Naive thymus-derived CD4-positive, alpha-beta T cell (primary cell): ENCODE measurements at regions of chr4 and their contacts with region 1.

Region 1: DNA sequence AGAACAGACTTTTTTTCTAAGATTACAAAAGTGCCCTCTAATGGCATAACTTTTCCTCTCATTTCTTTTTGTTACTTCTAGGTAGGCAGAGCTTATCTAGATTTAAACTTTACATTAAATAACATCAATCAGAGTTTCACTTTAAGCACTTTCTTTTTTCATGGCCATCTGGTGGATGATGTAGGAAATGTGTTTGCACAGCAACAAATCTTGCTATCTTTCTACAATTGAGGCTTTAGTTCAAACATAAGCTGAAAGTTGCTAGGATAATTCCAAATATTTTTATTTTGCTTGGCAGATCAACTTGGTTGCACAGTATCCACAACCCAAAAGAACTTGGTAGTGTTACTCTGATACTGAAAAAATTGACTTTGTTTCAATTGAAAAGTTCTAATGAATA is 22.0 kb downstream of the NDNF start:
- DNase-seq: peak in 6 of 9 donors; percentile 11 to 39 (median 26)
- ATAC-seq: peak; percentile 38
- H3K4me3 ChIP-seq: no peak overlapping the region
- H3K4me3 Mint-ChIP-seq: no peak overlapping the region
- H3K27ac ChIP-seq: no peak overlapping the region
- H3K27ac Mint-ChIP-seq: peak overlapping the region in 1 of 9 donors; percentile 51
- H3K4me1 ChIP-seq: no peaks in the 10 kb centered on the region
- H3K4me1 Mint-ChIP-seq: peaks cover 3 to 12% (median 5%) of the 10 kb centered on the region in 7 donors
- H3K27me3 ChIP-seq: no peaks in the 10 kb centered on the region
- H3K27me3 Mint-ChIP-seq: peaks cover 0 to 68% (median 0%) of the 10 kb centered on the region in 5 donors

Region 2: GRCh38 chr4:120718979-120719566 is 331.2 kb before region 1 on chr4:
- CTCF ChIA-PET with region 1: interaction called, 4 read pairs
- POLR2A ChIA-PET with region 1: no interaction called
- intact Hi-C with region 1: loop called in 1 of 2 experiments (anchors 1 kb)
- DNase-seq: peak in 6 of 9 donors; percentile 6 to 40 (median 36)
- ATAC-seq: peak; percentile 82
- H3K4me3 ChIP-seq: no peak overlapping the region
- H3K4me3 Mint-ChIP-seq: no peak overlapping the region
- H3K27ac ChIP-seq: no peak overlapping the region
- H3K27ac Mint-ChIP-seq: no peak overlapping the region
- H3K4me1 ChIP-seq: no peaks in the 10 kb centered on the region
- H3K4me1 Mint-ChIP-seq: peaks cover 0 to 2% (median 0%) of the 10 kb centered on the region in 7 donors
- H3K27me3 ChIP-seq: no peaks in the 10 kb centered on the region
- H3K27me3 Mint-ChIP-seq: peaks cover 0 to 16% (median 0%) of the 10 kb centered on the region in 5 donors

Region 3: GRCh38 chr4:120873554-120873953 is 176.7 kb before region 1 on chr4:
- CTCF ChIA-PET with region 1: interaction called, 3 read pairs
- POLR2A ChIA-PET with region 1: interaction called, 4 read pairs
- intact Hi-C with region 1: loop called in 1 of 2 experiments (anchors 1 kb)
- DNase-seq: no peak
- ATAC-seq: no peak
- H3K4me3 ChIP-seq: no peak overlapping the region
- H3K4me3 Mint-ChIP-seq: no peak overlapping the region
- H3K27ac ChIP-seq: no peak overlapping the region
- H3K27ac Mint-ChIP-seq: no peak overlapping the region
- H3K4me1 ChIP-seq: no peaks in the 10 kb centered on the region
- H3K4me1 Mint-ChIP-seq: peaks cover 0 to 3% (median 0%) of the 10 kb centered on the region in 7 donors
- H3K27me3 ChIP-seq: no peaks in the 10 kb centered on the region
- H3K27me3 Mint-ChIP-seq: peaks cover 0 to 8% (median 3%) of the 10 kb centered on the region in 5 donors

Region 4: DNA sequence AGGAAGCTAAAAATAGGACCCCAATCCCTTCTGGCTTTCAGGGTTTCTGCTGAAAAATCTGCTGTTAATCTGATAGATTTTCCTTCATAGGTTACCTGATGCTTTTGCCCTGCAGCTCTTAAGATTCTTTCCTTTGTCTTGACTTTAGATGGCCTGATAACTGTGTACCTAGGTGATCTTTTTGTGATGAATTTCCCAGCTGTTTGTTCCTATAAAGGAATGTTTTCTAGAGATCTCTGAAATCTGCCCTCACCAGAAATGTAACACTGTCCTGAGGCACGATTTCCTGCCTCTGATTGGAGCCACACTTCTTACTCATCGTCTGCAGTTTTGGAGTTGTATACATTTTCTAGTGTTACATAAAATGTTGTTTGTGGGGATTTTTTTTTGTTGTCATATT is 58.4 kb before region 1 on chr4:
- CTCF ChIA-PET with region 1: no interaction called
- POLR2A ChIA-PET with region 1: no interaction called
- intact Hi-C with region 1: no loop called
- DNase-seq: no peak
- ATAC-seq: no peak
- H3K4me3 ChIP-seq: no peak overlapping the region
- H3K4me3 Mint-ChIP-seq: no peak overlapping the region
- H3K27ac ChIP-seq: no peak overlapping the region
- H3K27ac Mint-ChIP-seq: no peak overlapping the region
- H3K4me1 ChIP-seq: peaks cover 0 to 10% of the 10 kb centered on the region in 2 donors
- H3K4me1 Mint-ChIP-seq: peaks cover 0 to 29% (median 19%) of the 10 kb centered on the region in 7 donors
- H3K27me3 ChIP-seq: no peaks in the 10 kb centered on the region
- H3K27me3 Mint-ChIP-seq: peaks cover 0 to 2% (median 0%) of the 10 kb centered on the region in 5 donors

Region 5: DNA sequence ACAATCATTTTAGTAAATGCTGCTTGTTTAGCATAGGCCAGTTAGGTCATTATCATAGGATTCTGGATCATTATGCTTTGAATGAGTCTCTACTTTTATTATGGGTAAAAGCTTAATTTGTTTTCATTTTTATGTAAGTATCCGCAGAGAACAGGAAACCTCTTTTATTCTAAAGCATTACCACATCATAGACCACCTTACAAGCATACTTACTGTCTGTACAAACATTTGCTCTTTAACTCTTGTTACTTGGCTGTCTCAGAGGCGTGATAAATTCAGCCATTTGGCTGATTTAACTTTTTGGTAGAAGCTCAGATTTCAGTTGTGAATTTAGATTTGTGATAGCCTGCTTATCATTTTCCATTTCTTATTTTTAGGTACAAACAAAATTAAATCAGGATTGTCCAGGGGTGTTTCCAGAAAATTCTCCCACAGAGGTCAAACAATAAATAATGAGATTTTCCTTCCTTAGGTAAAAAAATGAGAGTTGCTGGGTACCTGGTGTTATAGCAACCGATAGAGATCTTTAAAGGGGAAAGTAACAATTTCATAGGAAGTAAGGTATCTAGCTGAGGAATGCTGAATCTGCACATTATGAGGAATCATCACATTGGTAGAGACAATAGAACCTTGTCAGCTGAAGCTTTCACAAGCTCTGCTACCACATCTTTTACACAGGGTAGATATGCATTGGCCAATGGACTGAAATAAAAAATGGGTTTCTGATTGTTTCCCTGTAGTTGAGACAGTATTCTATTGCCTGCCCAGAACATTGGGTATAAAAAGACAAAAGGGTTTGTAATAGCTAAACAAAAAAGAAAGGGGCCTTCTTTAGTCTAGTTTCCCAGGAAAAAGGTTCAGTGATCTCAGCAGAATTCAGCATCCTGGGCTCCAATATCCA is 40.5 kb before region 1 on chr4:
- CTCF ChIA-PET with region 1: no interaction called
- POLR2A ChIA-PET with region 1: no interaction called
- intact Hi-C with region 1: loop called in 1 of 2 experiments (anchors 2 kb)
- DNase-seq: peak in 7 of 9 donors; percentile 18 to 70 (median 64)
- ATAC-seq: peak; percentile 93
- H3K4me3 ChIP-seq: no peak overlapping the region
- H3K4me3 Mint-ChIP-seq: peak overlapping the region in 9 of 10 donors; percentile 42 to 89 (median 74)
- H3K27ac ChIP-seq: peak overlapping the region; percentile 26
- H3K27ac Mint-ChIP-seq: peak overlapping the region in 8 of 9 donors; percentile 81 to 97 (median 92)
- H3K4me1 ChIP-seq: peaks cover 0 to 39% of the 10 kb centered on the region in 2 donors
- H3K4me1 Mint-ChIP-seq: peaks cover 3 to 96% (median 82%) of the 10 kb centered on the region in 7 donors
- H3K27me3 ChIP-seq: no peaks in the 10 kb centered on the region
- H3K27me3 Mint-ChIP-seq: no peaks in the 10 kb centered on the region

Region 6: DNA sequence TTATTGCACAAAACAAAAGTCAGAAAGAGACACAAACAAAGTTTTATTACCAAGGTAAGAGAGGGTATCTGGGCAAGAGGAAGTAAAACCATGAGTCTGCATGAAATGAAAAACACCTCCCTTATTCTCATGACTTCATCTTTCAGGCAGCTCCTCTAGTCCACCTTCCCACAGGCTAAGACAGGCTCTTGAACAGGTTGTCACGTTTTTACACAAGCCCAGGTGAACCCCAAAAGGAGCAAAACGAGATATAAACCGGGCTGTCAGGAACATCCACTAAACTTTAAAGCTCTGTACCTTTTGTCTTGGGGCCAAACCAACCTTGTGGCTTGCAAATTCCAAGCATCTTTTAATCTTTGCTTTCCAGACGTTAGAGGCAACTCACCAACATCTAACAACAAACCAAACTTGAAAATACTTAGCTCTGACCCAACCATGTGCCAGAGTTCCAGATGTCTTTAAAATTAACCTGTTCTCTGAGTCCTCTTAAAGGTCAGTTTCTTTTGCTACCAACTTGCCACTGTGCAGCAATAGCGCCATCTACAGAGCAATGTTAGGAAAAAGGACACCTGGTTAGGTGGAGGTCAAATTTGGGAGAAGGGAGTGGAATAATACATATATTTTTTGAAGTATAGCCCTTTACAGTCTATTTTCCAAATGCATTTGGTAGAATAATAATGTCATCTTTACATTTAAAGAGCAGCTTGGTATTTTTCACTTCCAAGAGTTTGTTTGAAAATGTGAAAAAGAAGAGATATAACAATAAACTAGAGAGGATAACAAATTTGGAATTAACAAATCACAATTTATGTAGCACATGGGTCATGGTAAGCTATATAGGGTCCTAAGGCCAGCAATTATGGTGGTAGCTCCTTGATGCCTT is 257.4 kb after region 1 on chr4:
- CTCF ChIA-PET with region 1: no interaction called
- POLR2A ChIA-PET with region 1: no interaction called
- intact Hi-C with region 1: loop called in 1 of 2 experiments (anchors 5 kb)
- DNase-seq: peak in 7 of 9 donors; percentile 10 to 52 (median 33)
- ATAC-seq: peak; percentile 70
- H3K4me3 ChIP-seq: no peak overlapping the region
- H3K4me3 Mint-ChIP-seq: no peak overlapping the region
- H3K27ac ChIP-seq: no peak overlapping the region
- H3K27ac Mint-ChIP-seq: peak overlapping the region in 1 of 9 donors; percentile 39
- H3K4me1 ChIP-seq: peaks cover 0 to 9% of the 10 kb centered on the region in 2 donors
- H3K4me1 Mint-ChIP-seq: peaks cover 3 to 19% (median 15%) of the 10 kb centered on the region in 7 donors
- H3K27me3 ChIP-seq: no peaks in the 10 kb centered on the region
- H3K27me3 Mint-ChIP-seq: peaks cover 0 to 17% (median 0%) of the 10 kb centered on the region in 5 donors